ENCODE measurements at regions of chr6 and their contacts with region 1.

Region 1: GRCh38 chr6:55980627-55981211 is 105.3 kb upstream of the BMP5 start:
- DNase-seq: peak; percentile 24
- CTCF ChIP-seq: peak; percentile 66

Region 2: DNA sequence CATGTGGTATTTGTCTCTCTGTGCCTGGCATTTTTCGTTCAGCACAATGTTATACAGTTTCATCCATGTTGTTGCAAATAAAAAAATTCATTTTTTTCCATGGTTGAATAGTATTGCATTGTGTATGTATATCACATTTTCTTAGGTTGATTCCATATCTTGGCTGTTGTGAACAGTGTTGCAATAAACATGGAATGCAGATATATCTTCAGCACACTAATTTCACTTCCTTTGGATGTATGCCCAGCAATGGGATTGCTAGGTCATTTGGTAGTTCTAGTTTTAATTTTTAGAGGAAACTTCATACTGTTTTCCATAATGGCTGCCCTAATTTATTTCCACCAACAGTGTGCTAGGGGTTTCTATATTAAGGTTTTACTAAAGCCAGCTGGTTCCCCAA is 600.8 kb before region 1 on chr6:
- in situ Hi-C with region 1: no loop called
- DNase-seq: no peak
- CTCF ChIP-seq: no peak

Region 3: GRCh38 chr6:56292505-56293181 is 311.9 kb after region 1 on chr6:
- in situ Hi-C with region 1: loop called (anchors 25 kb)
- DNase-seq: peak; percentile 6
- CTCF ChIP-seq: peak; percentile 45

Measured in GM13977 (cell line).